Panc1 (cell line): ENCODE measurements at regions of chr9 and their contacts with region 1.

Region 1: GRCh38 chr9:100756221-100756620 is 178.3 kb downstream of the CAVIN4 start:
- DNase-seq: no peak
- ATAC-seq: no peak
- H3K4me3 ChIP-seq: no peak overlapping the region
- H3K27ac ChIP-seq: no peak overlapping the region
- H3K4me1 ChIP-seq: no peaks in the 10 kb centered on the region
- H3K27me3 ChIP-seq: no peaks in the 10 kb centered on the region
- CTCF ChIP-seq: no peak

Region 2: DNA sequence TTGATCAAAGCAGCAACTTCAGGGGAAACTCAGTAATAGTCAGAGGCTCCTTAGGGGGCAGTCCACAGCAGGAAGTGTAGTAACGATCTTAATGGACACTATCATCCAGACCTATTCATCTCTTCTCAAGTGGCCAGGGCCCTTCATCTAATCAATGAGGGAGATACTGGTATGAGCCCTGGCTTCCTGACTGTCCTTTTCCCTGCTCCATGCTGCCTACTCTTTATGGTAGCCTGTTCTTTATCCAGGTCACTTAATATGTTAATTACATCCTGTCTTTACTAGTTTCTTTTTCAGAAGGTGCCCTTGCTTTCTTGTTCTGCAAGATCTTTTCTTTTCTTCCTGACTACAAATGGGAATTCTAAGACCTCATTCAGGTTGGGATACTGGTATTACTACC is 18.7 kb after region 1 on chr9:
- CTCF ChIA-PET with region 1: no interaction called
- POLR2A ChIA-PET with region 1: no interaction called
- in situ Hi-C with region 1: no loop called
- intact Hi-C with region 1: loop called (anchors 1 kb)
- DNase-seq: no peak
- ATAC-seq: no peak
- H3K4me3 ChIP-seq: no peak overlapping the region
- H3K27ac ChIP-seq: no peak overlapping the region
- H3K4me1 ChIP-seq: no peaks in the 10 kb centered on the region
- H3K27me3 ChIP-seq: no peaks in the 10 kb centered on the region
- CTCF ChIP-seq: no peak

Region 3: GRCh38 chr9:100794738-100795269 is 38.6 kb after region 1 on chr9:
- CTCF ChIA-PET with region 1: no interaction called
- POLR2A ChIA-PET with region 1: no interaction called
- in situ Hi-C with region 1: no loop called
- intact Hi-C with region 1: no loop called
- DNase-seq: no peak
- ATAC-seq: no peak
- H3K4me3 ChIP-seq: no peak overlapping the region
- H3K27ac ChIP-seq: no peak overlapping the region
- H3K4me1 ChIP-seq: no peaks in the 10 kb centered on the region
- H3K27me3 ChIP-seq: no peaks in the 10 kb centered on the region
- CTCF ChIP-seq: no peak